ENCODE measurements at regions of chr10 and their contacts with region 1.

Region 1: GRCh38 chr10:80662577-80663261 is 125.0 kb downstream of the SH2D4B start:
- DNase-seq: peak; percentile 15
- ATAC-seq: peak; percentile 86
- H3K4me3 ChIP-seq: peak overlapping the region; percentile 6; the same call in 1 of the 2 replicates
- H3K27ac ChIP-seq: no peak overlapping the region
- H3K4me1 ChIP-seq: no peaks in the 10 kb centered on the region
- H3K27me3 ChIP-seq: no peaks in the 10 kb centered on the region
- CTCF ChIP-seq: peak; percentile 72 to 83 (median 82)
- EP300 ChIP-seq: no peak
- POLR2A ChIP-seq: no peak
- RAD21 ChIP-seq: peak; percentile 64

Region 2: GRCh38 chr10:80408242-80409101 is 254.2 kb before region 1 on chr10 and contains the start of gene PRXL2A:
- CTCF ChIA-PET with region 1: no interaction called
- POLR2A ChIA-PET with region 1: no interaction called
- RAD21 ChIA-PET with region 1: no interaction called
- SMC1A ChIA-PET with region 1: no interaction called
- in situ Hi-C with region 1: no loop called
- intact Hi-C with region 1: no loop called
- DNase-seq: no peak
- ATAC-seq: peak; percentile 97
- H3K4me3 ChIP-seq: peak within 1 kb of the TSS; percentile 77
- H3K27ac ChIP-seq: no peak within 1 kb of the TSS
- H3K4me1 ChIP-seq: no peaks in the 10 kb centered on the region; the same call in 1 of the 2 replicates
- H3K27me3 ChIP-seq: peaks cover 0 to 3% of the 10 kb centered on the region in 2 experiments; a peak in 2 of 4 replicates
- CTCF ChIP-seq: no peak
- EP300 ChIP-seq: no peak
- POLR2A ChIP-seq: peak; percentile 72
- RAD21 ChIP-seq: no peak
- polyA plus RNA-seq, gene PRXL2A: 5.1 to 10.0 TPM

Region 3: DNA sequence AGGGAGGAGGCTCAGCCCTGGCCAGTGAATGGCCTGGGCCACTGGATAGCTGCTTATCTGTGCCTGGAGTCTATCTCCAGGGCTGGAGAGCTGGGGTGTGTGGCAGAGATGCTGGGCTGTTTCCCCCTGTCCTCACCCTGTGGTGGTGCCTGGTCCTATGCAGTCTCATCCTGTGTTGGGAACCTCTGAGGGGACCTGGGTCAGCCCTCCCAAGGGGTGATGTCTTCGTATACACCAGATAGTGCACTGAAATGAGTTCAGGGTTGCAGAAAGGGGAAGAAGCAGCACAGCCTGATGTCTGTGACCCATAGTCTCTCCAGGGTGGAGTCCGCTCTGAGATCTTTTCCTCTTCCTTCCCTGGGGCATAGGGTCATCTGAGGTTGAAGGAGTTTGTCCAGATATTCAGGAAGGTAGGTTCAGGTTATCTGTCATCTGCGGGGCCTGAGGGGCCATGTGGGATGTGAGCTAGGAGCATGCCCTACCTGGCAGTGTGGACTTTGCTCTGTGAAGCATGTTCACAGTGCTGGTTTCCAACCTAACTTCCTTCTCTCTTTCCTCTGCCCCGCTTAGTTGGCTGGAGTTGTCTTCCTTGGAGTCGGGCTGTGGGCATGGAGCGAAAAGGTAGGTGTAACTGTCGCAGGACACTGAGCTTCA is 158.4 kb before region 1 on chr10:
- CTCF ChIA-PET with region 1: interaction called, 8 read pairs
- POLR2A ChIA-PET with region 1: no interaction called
- RAD21 ChIA-PET with region 1: interaction called, 12 read pairs
- SMC1A ChIA-PET with region 1: interaction called, 4 read pairs
- in situ Hi-C with region 1: no loop called
- intact Hi-C with region 1: no loop called
- DNase-seq: no peak
- ATAC-seq: no peak
- H3K4me3 ChIP-seq: no peak overlapping the region
- H3K27ac ChIP-seq: no peak overlapping the region
- H3K4me1 ChIP-seq: peaks cover 31% of the 10 kb centered on the region
- H3K27me3 ChIP-seq: no peaks in the 10 kb centered on the region
- CTCF ChIP-seq: no peak
- EP300 ChIP-seq: no peak
- POLR2A ChIP-seq: no peak
- RAD21 ChIP-seq: no peak

Region 4: DNA sequence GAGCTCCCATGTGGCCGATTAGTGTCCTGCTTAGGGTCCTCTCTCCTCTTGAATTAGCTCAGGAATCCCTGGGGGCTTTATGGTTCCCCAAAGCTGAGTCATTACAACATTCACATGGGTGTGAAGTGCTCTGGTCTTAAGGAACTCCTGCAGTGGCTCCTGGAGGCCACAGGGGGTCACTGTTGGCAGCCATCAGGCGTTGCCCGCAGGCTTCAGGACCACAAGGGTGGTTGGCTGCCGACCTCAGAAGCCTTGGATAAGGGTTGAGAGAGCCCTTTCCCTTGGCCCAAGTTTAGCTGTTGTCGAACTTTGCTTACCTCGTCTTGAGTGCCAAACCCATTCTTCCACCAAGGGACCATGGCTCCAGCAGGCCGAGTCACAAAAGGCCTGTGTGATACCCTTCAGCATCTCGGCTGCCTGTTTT is 63.3 kb before region 1 on chr10:
- CTCF ChIA-PET with region 1: interaction called, 63 read pairs
- POLR2A ChIA-PET with region 1: no interaction called
- RAD21 ChIA-PET with region 1: interaction called, 24 read pairs
- SMC1A ChIA-PET with region 1: interaction called, 14 read pairs
- in situ Hi-C with region 1: no loop called
- intact Hi-C with region 1: loop called (anchors 2 kb)
- DNase-seq: peak; percentile 57
- ATAC-seq: peak; percentile 79
- H3K4me3 ChIP-seq: no peak overlapping the region
- H3K27ac ChIP-seq: no peak overlapping the region; the same call in 1 of the 2 replicates
- H3K4me1 ChIP-seq: peaks cover 17% of the 10 kb centered on the region
- H3K27me3 ChIP-seq: no peaks in the 10 kb centered on the region
- CTCF ChIP-seq: peak; percentile 75 to 96 (median 90)
- EP300 ChIP-seq: peak in 1 of 2 experiments; percentile 46; a peak in 1 of 4 replicates
- POLR2A ChIP-seq: no peak
- RAD21 ChIP-seq: peak; percentile 71

Region 5: DNA sequence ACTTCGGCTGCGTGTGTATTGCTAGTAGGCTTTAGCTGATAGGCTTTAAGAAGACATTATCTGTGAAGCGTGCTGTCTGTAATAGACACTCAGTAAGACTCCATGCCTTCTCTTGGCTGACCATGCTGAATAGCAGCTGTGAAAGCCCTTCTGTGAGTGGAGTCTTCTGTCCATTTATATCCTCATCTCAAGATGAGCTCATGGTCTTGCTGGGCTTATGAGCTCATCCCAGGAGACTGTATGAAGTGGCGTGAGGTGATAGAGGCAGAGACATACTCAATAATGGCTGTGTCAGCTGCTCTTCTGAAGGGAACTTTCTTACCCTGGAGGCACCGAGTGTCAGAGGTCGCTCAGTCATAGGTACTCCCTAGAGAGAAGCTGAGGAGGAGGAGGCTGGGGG is 13.5 kb before region 1 on chr10:
- CTCF ChIA-PET with region 1: interaction called, 72 read pairs
- POLR2A ChIA-PET with region 1: no interaction called
- RAD21 ChIA-PET with region 1: interaction called, 3 read pairs
- SMC1A ChIA-PET with region 1: interaction called, 8 read pairs
- in situ Hi-C with region 1: no loop called
- intact Hi-C with region 1: no loop called
- DNase-seq: no peak
- ATAC-seq: no peak
- H3K4me3 ChIP-seq: no peak overlapping the region
- H3K27ac ChIP-seq: no peak overlapping the region
- H3K4me1 ChIP-seq: no peaks in the 10 kb centered on the region
- H3K27me3 ChIP-seq: no peaks in the 10 kb centered on the region
- CTCF ChIP-seq: no peak
- EP300 ChIP-seq: no peak
- POLR2A ChIP-seq: no peak
- RAD21 ChIP-seq: no peak

Region 6: DNA sequence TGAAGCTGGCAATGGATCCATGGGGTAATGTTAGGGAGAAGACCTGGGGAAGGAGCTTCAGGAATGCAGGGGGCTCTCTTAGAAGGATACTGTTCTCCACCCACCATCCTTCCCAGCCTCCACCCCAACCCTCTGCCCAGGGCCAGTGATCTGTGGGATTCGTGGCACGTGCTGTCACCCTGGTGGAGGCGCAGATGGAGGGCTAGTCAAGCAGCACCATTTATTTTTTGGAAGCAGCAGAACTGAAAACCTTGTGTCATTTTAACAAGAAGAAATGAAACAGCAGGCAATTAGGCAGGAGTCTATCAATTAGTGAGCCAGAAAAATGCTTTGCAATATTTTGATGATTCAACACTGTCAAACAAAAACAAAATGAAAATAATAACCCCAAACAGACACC is 30.8 kb after region 1 on chr10:
- CTCF ChIA-PET with region 1: interaction called, 12 read pairs
- POLR2A ChIA-PET with region 1: no interaction called
- RAD21 ChIA-PET with region 1: no interaction called
- SMC1A ChIA-PET with region 1: interaction called, 3 read pairs
- in situ Hi-C with region 1: no loop called
- intact Hi-C with region 1: no loop called
- DNase-seq: no peak
- ATAC-seq: no peak
- H3K4me3 ChIP-seq: no peak overlapping the region
- H3K27ac ChIP-seq: no peak overlapping the region
- H3K4me1 ChIP-seq: no peaks in the 10 kb centered on the region
- H3K27me3 ChIP-seq: no peaks in the 10 kb centered on the region
- CTCF ChIP-seq: no peak
- EP300 ChIP-seq: no peak
- POLR2A ChIP-seq: no peak
- RAD21 ChIP-seq: no peak

Region 7: DNA sequence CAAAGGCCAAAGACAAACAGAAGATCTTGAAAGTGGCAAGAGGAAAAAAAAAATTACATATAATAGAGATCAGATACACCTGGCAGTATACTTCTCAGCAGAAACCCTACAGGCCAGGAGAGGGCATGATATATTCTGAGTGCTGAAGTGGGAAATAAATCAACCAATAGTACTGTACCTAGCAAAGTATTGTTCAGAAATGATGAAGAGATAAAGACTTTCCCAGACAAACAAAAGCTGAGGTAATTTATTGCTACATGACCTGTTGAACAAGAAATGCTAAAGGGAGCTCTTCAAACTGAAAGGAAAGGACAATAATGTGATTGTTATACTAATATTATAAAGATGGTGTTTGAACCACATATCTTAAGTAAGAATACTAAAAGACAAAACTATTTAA is 166.9 kb after region 1 on chr10:
- CTCF ChIA-PET with region 1: no interaction called
- POLR2A ChIA-PET with region 1: no interaction called
- RAD21 ChIA-PET with region 1: no interaction called
- SMC1A ChIA-PET with region 1: no interaction called
- in situ Hi-C with region 1: no loop called
- intact Hi-C with region 1: no loop called
- DNase-seq: no peak
- ATAC-seq: no peak
- H3K4me3 ChIP-seq: no peak overlapping the region
- H3K27ac ChIP-seq: no peak overlapping the region
- H3K4me1 ChIP-seq: no peaks in the 10 kb centered on the region
- H3K27me3 ChIP-seq: no peaks in the 10 kb centered on the region
- CTCF ChIP-seq: no peak
- EP300 ChIP-seq: no peak
- POLR2A ChIP-seq: no peak
- RAD21 ChIP-seq: no peak

Region 8: DNA sequence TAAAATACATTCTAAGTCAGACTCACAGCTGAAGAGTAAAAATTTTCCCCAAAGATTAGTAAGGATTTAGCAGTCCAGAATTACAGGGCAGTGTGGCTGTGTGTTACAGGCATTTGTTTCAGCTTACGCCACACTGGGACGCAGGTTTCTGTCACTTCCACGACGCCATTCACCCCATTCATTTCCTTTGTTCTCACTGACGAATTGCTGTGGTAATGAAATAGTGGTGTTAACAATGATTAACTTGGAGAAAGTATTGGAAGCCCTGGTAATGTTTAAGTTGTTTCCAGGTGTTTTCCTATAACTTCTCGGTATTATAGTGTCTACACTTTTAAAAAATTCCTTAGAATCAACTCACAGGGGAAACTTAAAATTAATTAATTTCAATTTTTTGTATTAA is 245.9 kb after region 1 on chr10:
- CTCF ChIA-PET with region 1: no interaction called
- POLR2A ChIA-PET with region 1: no interaction called
- RAD21 ChIA-PET with region 1: no interaction called
- SMC1A ChIA-PET with region 1: no interaction called
- in situ Hi-C with region 1: no loop called
- intact Hi-C with region 1: no loop called
- DNase-seq: no peak
- ATAC-seq: no peak
- H3K4me3 ChIP-seq: no peak overlapping the region
- H3K27ac ChIP-seq: no peak overlapping the region
- H3K4me1 ChIP-seq: no peaks in the 10 kb centered on the region
- H3K27me3 ChIP-seq: no peaks in the 10 kb centered on the region
- CTCF ChIP-seq: no peak
- EP300 ChIP-seq: no peak
- POLR2A ChIP-seq: no peak
- RAD21 ChIP-seq: no peak

Region 9: DNA sequence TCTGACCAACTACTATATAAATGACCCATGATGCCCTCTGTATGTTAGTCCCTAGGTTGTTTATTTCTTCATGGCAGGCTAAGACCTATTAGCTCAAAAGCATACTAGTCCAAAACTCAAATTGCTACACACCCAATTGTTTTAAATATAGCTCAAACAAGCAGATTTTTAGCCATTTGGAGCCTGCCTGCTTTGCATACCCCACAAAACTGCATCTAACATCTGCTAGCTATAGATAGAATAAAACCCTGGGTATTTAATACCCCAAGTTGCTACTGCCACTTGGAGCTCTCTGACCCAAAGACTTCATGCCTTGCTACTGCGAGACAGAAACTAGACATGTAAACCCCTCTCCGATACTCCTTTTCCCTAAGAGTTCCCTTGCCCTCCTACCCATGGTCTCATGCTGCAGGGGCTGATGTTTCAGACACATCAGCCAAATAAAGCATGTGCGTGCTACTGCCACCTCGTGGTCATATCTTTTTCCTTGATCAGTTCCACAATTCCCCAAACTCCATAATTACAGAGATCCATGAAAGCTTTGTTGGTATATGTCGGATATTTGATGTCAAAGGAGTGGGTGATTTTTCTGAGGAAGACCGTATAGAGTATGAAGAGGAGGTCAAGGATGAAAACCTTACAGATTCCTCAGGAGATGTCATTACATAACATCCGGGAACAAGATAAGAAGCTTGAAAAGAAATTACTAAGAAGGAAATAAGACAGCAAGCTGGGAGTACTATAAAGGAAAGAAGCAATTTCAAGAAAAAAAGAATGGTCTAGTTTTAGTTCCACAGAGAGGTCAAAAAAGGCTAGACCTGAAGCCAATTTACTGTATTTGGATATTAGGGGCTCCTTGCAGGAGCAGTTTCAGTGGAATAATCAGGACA is 261.6 kb after region 1 on chr10:
- CTCF ChIA-PET with region 1: interaction called, 36 read pairs
- POLR2A ChIA-PET with region 1: no interaction called
- RAD21 ChIA-PET with region 1: interaction called, 5 read pairs
- SMC1A ChIA-PET with region 1: interaction called, 6 read pairs
- in situ Hi-C with region 1: no loop called
- intact Hi-C with region 1: loop called (anchors 1 kb)
- DNase-seq: no peak
- ATAC-seq: peak; percentile 81
- H3K4me3 ChIP-seq: no peak overlapping the region
- H3K27ac ChIP-seq: no peak overlapping the region
- H3K4me1 ChIP-seq: no peaks in the 10 kb centered on the region
- H3K27me3 ChIP-seq: no peaks in the 10 kb centered on the region
- CTCF ChIP-seq: peak; percentile 55 to 69 (median 60)
- EP300 ChIP-seq: no peak
- POLR2A ChIP-seq: no peak
- RAD21 ChIP-seq: peak; percentile 57

Region 10: GRCh38 chr10:81179805-81180452 is 517.2 kb after region 1 on chr10:
- CTCF ChIA-PET with region 1: interaction called, 31 read pairs
- POLR2A ChIA-PET with region 1: no interaction called
- RAD21 ChIA-PET with region 1: interaction called, 27 read pairs
- SMC1A ChIA-PET with region 1: interaction called, 6 read pairs
- in situ Hi-C with region 1: no loop called
- intact Hi-C with region 1: loop called (anchors 1 kb)
- DNase-seq: peak; percentile 16
- ATAC-seq: peak; percentile 98
- H3K4me3 ChIP-seq: no peak overlapping the region
- H3K27ac ChIP-seq: no peak overlapping the region
- H3K4me1 ChIP-seq: no peaks in the 10 kb centered on the region
- H3K27me3 ChIP-seq: no peaks in the 10 kb centered on the region
- CTCF ChIP-seq: peak; percentile 53 to 71 (median 54); a peak in 5 of 6 replicates
- EP300 ChIP-seq: no peak
- POLR2A ChIP-seq: no peak
- RAD21 ChIP-seq: peak; percentile 88

Measured in GM12878 (cell line).